Right ventricle myocardium inferior (tissue), 1 donor: ENCODE measurements at regions of chr3 and their contacts with region 1.

Region 1: GRCh38 chr3:136018876-136019275 is 53.3 kb downstream of the PPP2R3A start:
- DNase-seq: no peak
- ATAC-seq: no peak

Region 2: GRCh38 chr3:135965506-135966270 is 53.2 kb before region 1 on chr3 and contains the start of gene PPP2R3A:
- intact Hi-C with region 1: loop called (anchors 2 kb)
- DNase-seq: peak; percentile 89
- ATAC-seq: peak; percentile 97
- total RNA-seq, gene PPP2R3A: 107 TPM

Region 3: DNA sequence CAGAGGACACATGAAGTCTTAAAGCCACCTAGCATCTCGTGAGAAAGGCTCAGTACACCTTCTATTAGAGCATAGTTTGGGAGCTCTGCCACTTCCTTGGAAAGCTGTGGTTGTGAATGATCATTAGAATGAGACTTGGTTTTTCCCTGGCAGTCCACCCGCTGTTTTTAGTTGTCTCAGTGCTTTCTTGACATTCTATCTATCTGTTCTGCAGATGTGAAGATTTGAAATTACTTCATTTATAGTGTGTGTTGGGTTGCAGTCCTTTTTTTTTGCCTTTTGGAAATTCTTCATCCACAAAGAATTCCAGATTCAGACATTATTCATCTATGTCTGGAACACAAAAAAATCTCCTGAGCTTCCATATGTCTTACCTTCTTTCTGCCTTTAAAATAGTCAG is 29.6 kb before region 1 on chr3:
- intact Hi-C with region 1: loop called (anchors 5 kb)
- DNase-seq: no peak
- ATAC-seq: no peak

Region 4: DNA sequence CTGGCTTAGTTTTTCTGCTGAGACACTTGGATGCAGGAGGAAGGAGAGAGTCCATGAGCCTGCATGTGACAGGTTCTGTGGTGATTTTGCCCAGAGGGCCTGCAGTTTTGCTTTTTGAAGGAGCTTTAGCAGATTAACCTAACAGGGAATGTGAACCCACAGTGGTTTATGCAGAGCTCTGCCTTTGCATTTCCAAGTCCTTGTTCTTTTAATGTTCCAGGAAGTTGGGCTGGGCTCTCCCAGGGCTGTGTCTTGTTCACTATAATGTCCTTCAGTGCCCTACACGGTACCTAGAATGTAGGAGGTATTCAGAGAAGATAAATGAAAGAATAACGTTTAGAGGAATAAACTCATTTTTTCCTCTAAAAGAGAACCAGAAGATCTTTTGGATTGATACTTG is 281.6 kb after region 1 on chr3:
- intact Hi-C with region 1: loop called (anchors 5 kb)
- DNase-seq: no peak
- ATAC-seq: no peak

Region 5: DNA sequence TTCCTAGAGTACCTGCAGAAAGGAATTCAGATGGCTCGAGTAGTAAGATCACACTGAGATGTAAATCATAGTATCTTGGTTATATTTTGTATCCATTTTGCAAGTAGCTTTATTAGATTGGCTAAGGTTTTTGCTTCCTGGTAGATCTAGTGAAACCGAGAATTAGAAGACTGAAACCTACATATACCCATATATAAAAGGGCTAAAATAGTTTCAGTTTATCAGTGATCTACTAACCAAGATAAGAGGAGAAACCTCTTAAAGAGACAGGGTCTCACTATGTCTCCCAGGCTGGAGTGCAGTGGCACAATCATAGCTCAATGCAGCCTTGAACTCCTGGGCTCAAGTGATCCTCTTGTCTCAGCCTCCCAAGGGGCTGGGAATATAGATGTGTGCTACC is 366.6 kb after region 1 on chr3:
- intact Hi-C with region 1: no loop called
- DNase-seq: no peak
- ATAC-seq: no peak